ENCODE measurements at regions of chr2 and their contacts with region 1.

Region 1: DNA sequence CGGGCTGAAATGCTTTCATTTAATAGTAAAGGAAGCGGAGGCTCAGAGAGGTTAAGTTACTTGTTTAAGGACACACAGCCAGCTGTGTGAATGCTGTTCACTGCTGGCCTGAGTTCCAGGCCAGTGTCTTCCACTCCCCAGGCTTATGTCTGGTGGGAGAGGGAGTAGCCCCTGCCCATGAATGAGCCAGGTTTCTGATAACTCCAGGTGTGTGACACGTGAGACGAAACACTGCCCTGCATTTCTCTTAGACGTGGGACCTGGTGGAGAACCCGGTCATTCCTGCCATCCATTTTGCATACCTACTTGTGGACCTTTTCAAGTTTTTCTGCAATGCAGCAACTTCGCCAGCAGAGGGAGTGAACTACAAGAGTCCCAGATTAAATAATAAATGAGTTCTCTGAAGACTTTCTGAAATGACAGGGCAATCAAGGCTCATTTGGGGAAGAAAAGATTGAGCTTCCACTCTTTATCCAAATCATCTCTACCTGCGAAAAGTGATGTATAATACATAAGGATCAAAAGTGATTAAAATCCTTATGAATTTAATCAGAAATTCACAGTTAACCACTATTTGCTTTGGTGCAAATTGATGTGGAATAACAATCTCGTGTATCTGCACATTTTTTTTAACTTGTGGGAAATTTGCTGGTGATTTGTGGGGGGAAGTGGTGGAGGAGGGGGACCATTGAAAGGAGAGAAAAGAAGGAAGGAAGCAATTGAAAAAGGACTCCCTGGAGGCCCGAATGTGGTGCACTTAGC is 79.4 kb upstream of the ASB18 start:
- DNase-seq: peak in 1 of 2 donors; percentile 79
- H3K4me3 ChIP-seq: no peak overlapping the region
- H3K27ac ChIP-seq: no peak overlapping the region
- H3K4me1 ChIP-seq: peaks cover 0 to 3% of the 10 kb centered on the region in 2 donors
- H3K27me3 ChIP-seq: no peaks in the 10 kb centered on the region
- CTCF ChIP-seq: peak; percentile 52 to 74 (median 74)

Region 2: GRCh38 chr2:236282406-236282805 is 61.2 kb before region 1 on chr2:
- intact Hi-C with region 1: no loop called
- DNase-seq: no peak
- H3K4me3 ChIP-seq: no peak overlapping the region
- H3K27ac ChIP-seq: no peak overlapping the region
- H3K4me1 ChIP-seq: no peaks in the 10 kb centered on the region
- H3K27me3 ChIP-seq: no peaks in the 10 kb centered on the region
- CTCF ChIP-seq: no peak

Region 3: DNA sequence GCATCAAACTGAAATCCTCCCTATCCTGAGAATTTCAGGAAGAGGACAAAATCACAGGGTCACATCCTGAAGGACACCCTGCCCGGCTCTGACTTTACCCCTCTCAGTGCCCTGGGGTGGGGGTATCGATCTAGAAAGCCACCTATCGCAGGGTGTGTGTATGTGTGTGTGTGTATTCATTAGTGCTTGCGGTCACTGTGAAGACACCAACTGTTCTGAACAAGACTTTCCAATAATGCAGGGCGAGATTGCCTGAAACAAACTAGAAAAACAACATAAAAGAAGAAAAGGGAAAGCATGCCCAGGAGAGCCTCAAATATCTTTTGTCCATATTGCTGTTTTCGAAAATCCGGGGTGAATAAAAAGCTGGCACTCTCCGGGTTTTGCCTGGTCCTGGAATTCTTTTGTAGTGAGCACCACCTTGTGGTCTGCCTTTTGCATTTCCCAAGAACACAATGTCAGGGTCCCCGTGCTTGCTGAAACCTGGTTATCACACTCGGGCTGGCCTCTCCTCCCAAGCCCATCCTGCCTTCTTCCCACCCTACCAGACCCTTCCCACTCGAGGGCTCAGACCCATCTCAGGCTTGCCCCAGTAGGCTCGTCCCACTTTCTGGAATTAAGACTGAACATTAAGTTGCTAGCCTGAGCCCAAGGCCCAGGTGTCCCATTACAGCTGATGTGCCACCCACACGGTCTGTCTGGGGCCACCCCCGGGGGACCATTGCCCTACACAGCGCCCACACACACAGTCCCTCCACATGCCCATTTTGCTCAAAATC is 717.1 kb after region 1 on chr2:
- intact Hi-C with region 1: loop called (anchors 2 kb)
- DNase-seq: no peak
- H3K4me3 ChIP-seq: peak overlapping the region in 1 of 2 donors; percentile 31
- H3K27ac ChIP-seq: no peak overlapping the region
- H3K4me1 ChIP-seq: peaks cover 0 to 15% of the 10 kb centered on the region in 2 donors
- H3K27me3 ChIP-seq: no peaks in the 10 kb centered on the region
- CTCF ChIP-seq: peak; percentile 61 to 74 (median 71)

Measured in ascending aorta (tissue), 2 donors.